ENCODE measurements at regions of chr11 and their contacts with region 1.

Region 1: DNA sequence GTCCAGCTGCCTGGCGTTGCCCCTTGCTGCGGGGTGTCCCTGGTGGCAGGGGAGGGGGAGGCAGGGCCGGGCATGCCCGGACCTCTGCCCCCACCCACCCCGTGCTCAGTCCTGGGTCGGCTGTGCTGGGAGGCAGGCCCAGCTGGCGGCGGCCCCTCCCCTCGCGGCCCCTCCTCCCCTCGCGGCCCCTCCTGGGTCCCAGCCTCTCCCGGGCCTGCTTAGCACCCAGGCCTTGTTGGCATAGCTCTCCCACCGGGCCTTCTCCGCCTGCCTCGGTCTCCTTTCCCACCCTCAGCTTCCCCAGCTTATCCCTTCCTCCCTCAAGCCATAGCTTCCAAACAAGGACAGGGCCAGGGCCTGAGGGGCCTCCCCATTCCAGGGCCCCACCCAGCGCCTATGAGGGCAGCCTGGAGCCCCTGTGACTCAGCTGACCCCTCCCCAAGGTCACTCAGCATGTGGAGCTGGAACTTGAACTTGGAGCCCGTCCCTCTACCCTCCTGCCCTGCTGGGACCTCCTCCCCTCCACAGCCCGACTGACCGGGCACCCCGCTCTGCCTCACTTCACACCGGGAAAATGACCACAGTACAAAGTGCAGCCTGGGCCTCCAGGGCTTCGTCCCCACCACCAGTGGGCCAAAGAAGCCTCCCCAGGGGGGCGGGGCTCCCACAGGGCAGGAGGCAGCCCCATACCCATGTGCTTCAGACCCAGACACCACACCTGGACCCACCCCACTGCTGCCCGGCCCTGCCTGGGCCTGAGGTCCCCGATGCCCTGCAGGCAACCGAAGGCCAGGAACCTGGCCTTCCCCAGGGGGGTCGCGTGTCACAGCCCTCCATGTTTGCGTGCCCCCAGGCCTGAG is 1.2 kb downstream of the EPS8L2 start:
- DNase-seq: peak in 1 of 2 donors; percentile 74
- H3K4me3 ChIP-seq: peak overlapping the region; percentile 67 to 72
- H3K27ac ChIP-seq: peak overlapping the region; percentile 90 to 96
- H3K4me1 ChIP-seq: peaks cover 0 to 34% of the 10 kb centered on the region in 2 donors
- H3K27me3 ChIP-seq: no peaks in the 10 kb centered on the region
- CTCF ChIP-seq: peak in 1 of 3 experiments; percentile 17

Region 2: DNA sequence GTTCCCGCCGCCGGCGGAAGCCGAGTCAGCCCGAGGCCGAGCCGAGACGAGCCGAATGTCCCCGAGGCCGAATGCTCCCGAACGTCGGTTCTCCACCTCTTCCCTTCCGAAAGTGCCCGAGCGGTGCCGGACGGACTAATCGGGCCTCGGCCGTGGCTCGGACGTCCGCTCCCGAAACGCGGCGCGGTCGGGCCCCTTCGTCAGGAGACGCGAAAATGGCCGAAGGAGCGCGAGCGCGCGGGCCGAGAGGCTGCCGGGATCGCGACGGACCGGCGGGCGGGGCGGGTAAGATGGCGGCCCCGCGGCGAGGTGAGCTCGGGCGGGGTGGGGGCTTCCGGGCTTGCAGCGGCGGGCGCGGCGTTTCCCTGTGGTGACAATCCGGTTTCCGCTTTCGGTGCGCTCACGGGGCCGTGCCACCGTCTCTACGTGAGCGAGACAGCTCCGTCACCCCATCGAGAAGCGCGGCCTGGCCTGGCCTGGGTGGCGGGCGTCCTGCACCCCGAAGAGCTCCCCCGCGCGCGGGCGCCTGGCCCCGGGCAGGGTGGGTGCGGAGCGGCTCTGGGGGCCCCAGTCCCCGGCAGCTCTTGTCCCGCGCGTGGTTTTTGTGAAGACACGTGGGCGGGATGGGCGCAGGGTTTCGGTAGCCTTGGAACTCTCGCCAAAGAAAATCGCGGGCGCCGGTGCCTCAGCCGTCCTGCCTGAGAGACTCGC is 11.5 kb before region 1 on chr11 and contains the start of gene TMEM80:
- intact Hi-C with region 1: loop called (anchors 1 kb)
- DNase-seq: peak; percentile 93 to 99
- H3K4me3 ChIP-seq: peak within 1 kb of the TSS; percentile 93 to 97
- H3K27ac ChIP-seq: peak within 1 kb of the TSS; percentile 100
- H3K4me1 ChIP-seq: peaks cover 14 to 38% of the 10 kb centered on the region in 2 donors
- H3K27me3 ChIP-seq: no peaks in the 10 kb centered on the region
- CTCF ChIP-seq: no peak
- total RNA-seq, gene TMEM80: 1.3 TPM

Measured in ascending aorta (tissue), 2 donors.